PC-9 (cell line): ENCODE measurements at regions of chr5 and their contacts with region 1.

Region 1: DNA sequence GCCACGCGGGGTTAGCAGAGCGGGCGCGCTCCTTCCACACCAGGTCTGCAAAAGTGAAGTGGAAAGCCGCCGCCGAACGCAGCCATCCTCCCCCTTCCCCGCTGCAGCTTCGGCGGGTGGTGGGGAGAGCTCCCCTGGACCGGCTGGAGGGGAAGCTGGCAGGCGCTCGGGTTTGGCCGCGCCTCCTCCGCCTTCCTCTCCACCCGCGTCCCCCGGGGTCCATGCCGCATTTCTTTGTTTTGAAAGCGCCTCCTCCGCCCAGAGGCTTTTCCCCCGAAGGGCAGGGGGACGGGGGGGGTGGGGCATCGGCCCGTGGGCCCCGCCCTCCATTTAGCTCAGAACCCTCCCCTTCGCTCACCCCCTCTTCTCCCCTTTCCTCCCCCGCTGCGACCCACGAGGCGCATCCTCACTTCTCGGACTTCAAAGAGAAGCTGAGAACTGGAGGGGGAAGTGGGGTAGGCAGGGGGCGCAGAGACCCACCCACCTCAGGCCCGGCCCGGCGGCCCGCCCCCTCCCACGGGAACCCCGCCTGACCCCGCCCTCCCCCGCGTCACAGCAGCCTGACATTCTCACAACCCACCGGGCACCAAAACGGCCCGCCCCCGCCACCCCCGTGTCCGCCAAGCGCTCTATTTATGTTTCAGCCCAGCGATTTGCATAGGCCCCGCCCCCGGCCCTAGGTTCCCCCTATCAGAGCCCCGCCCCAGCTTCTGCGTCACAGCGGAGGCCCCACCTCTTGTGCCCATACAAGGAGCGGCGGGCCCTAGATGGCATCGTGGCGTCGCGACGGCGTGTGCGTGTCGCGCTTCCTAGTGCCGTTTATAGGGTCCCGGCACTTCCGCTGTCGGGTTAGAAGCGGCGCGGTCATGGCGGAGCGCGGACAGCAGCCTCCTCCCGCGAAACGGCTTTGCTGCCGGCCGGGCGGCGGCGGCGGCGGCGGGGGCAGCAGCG is at the start of gene ZSWIM6:
- DNase-seq: peak; percentile 94 to 96
- H3K4me3 ChIP-seq: peak within 1 kb of the TSS; percentile 97
- H3K27ac ChIP-seq: peak within 1 kb of the TSS; percentile 64
- H3K4me1 ChIP-seq: peaks cover 47% of the 10 kb centered on the region
- H3K27me3 ChIP-seq: no peaks in the 10 kb centered on the region
- CTCF ChIP-seq: no peak
- total RNA-seq, gene ZSWIM6: 9.7 and 12.9 TPM in 2 replicates

Region 2: GRCh38 chr5:60710373-60710772 is 621.3 kb before region 1 on chr5:
- CTCF ChIA-PET with region 1: no interaction called
- POLR2A ChIA-PET with region 1: no interaction called
- intact Hi-C with region 1: no loop called
- DNase-seq: no peak
- H3K4me3 ChIP-seq: no peak overlapping the region
- H3K27ac ChIP-seq: no peak overlapping the region
- H3K4me1 ChIP-seq: no peaks in the 10 kb centered on the region
- H3K27me3 ChIP-seq: no peaks in the 10 kb centered on the region
- CTCF ChIP-seq: no peak

Region 3: GRCh38 chr5:61055434-61056006 is 276.2 kb before region 1 on chr5:
- CTCF ChIA-PET with region 1: no interaction called
- POLR2A ChIA-PET with region 1: interaction called, 3 read pairs
- intact Hi-C with region 1: loop called (anchors 1 kb)
- DNase-seq: peak in 1 of 2 experiments; percentile 42
- H3K4me3 ChIP-seq: no peak overlapping the region
- H3K27ac ChIP-seq: no peak overlapping the region
- H3K4me1 ChIP-seq: peaks cover 29% of the 10 kb centered on the region
- H3K27me3 ChIP-seq: no peaks in the 10 kb centered on the region
- CTCF ChIP-seq: peak; percentile 75

Region 4: GRCh38 chr5:61167382-61167781 is 164.3 kb before region 1 on chr5:
- CTCF ChIA-PET with region 1: interaction called, 3 read pairs
- POLR2A ChIA-PET with region 1: interaction called, 4 read pairs
- intact Hi-C with region 1: loop called (anchors 1 kb)
- DNase-seq: peak in 1 of 2 experiments; percentile 11
- H3K4me3 ChIP-seq: no peak overlapping the region
- H3K27ac ChIP-seq: no peak overlapping the region
- H3K4me1 ChIP-seq: peaks cover 13% of the 10 kb centered on the region
- H3K27me3 ChIP-seq: no peaks in the 10 kb centered on the region
- CTCF ChIP-seq: peak; percentile 67

Region 5: DNA sequence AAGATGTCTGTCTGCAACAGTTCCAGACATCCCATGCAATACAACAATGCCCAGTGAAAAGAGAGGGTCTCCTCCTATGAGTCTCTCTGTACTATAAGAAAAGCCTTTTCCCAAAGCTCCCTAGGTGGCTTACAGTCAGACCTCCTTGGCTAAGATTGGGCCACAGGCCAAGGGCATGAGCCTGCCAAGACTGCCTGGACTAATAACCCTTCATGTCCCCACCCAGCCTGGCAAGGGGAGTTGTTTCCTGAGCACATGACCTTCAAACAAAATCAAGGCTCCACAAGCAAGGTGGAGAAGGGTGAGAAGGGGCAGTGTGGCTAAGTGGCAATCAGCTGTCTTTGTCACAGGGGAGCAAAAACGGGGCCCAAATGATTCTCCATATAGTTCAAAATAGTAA is 75.2 kb before region 1 on chr5:
- CTCF ChIA-PET with region 1: no interaction called
- POLR2A ChIA-PET with region 1: interaction called, 8 read pairs
- intact Hi-C with region 1: loop called (anchors 5 kb)
- DNase-seq: peak in 1 of 2 experiments; percentile 26
- H3K4me3 ChIP-seq: no peak overlapping the region
- H3K27ac ChIP-seq: no peak overlapping the region
- H3K4me1 ChIP-seq: peaks cover 34% of the 10 kb centered on the region
- H3K27me3 ChIP-seq: no peaks in the 10 kb centered on the region
- CTCF ChIP-seq: no peak

Region 6: DNA sequence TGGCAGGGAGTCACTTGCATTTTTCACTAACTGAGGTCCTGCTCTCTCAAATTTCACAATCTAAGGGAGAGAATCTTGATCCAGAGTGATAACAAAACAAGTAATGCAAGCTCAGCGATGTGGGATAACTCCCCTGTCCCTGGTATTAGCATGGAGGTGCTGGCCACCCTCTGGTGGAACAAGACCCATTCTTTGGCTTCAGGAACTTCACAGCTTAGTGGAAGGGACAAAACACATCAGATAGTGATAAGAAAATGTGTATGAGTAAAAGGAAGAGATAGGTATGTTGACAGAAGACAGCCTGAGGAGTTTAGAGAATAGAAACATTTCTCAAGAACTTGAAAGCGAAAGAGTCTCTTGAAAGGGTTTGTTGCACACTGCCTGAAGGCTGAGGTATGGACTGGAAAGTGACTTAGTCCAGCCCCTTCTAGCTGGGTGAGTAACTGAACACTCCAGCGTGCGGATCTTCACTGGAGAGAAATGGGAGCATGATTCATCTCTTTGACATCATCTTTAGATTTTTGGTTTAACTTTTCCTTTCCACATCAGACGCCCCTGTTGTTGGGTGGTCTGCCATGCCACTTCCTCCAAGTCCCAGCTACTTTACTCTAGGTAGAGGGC is 25.1 kb before region 1 on chr5:
- CTCF ChIA-PET with region 1: interaction called, 3 read pairs
- POLR2A ChIA-PET with region 1: interaction called, 18 read pairs
- intact Hi-C with region 1: loop called (anchors 1 kb)
- DNase-seq: peak in 1 of 2 experiments; percentile 76
- H3K4me3 ChIP-seq: no peak overlapping the region
- H3K27ac ChIP-seq: no peak overlapping the region
- H3K4me1 ChIP-seq: peaks cover 71% of the 10 kb centered on the region
- H3K27me3 ChIP-seq: no peaks in the 10 kb centered on the region
- CTCF ChIP-seq: no peak

Region 7: GRCh38 chr5:61408476-61409168 is 76.9 kb after region 1 on chr5:
- CTCF ChIA-PET with region 1: interaction called, 3 read pairs
- POLR2A ChIA-PET with region 1: interaction called, 12 read pairs
- intact Hi-C with region 1: loop called (anchors 1 kb)
- DNase-seq: peak; percentile 98 to 99
- H3K4me3 ChIP-seq: peak overlapping the region; percentile 49; the same call in 1 of the 2 replicates
- H3K27ac ChIP-seq: peak overlapping the region; percentile 99
- H3K4me1 ChIP-seq: peaks cover 27% of the 10 kb centered on the region
- H3K27me3 ChIP-seq: no peaks in the 10 kb centered on the region
- CTCF ChIP-seq: no peak

Region 8: GRCh38 chr5:61569353-61569752 is 237.7 kb after region 1 on chr5:
- CTCF ChIA-PET with region 1: no interaction called
- POLR2A ChIA-PET with region 1: no interaction called
- intact Hi-C with region 1: no loop called
- DNase-seq: no peak
- H3K4me3 ChIP-seq: no peak overlapping the region
- H3K27ac ChIP-seq: no peak overlapping the region
- H3K4me1 ChIP-seq: no peaks in the 10 kb centered on the region
- H3K27me3 ChIP-seq: peaks cover 19% of the 10 kb centered on the region; the same call in 1 of the 2 replicates
- CTCF ChIP-seq: no peak

Region 9: DNA sequence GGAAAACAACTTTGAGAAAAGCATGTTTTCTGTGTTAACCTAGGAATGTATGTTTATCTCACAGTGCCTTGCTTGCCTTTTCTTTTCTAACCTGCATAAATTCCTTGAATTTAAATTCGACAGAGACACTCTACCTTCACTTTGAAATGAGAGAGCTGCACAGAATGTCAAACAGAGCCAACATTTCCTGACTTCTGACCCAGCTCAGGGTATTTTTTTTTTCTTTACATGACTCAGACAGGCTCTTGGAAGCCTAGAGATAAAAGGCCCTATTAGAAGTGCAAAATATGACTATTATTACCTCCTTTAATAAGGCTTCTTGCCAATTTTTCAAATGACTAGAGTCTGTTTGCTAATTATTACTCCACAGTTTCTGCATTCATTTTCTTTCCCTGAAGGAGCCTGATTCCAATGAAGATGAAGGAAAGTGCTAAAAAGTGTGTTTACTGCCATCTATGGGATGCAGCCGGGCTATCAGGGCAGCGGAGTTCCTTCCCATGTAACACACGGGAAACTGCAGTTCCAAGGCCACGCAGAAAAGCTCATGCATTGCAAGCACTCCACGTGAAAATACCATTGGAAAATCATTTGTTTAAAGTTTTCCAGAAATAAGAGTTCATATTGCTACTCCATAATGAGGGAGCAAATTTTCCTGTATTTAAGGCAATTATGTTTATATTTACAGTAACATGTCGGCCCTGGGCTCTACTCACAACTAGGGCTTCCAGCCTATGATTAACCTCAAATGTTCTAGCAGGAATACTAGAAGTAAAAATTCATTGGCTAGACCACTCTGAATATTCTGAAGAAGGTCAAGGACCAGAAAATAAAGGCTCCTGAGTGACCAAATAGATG is 486.0 kb after region 1 on chr5:
- CTCF ChIA-PET with region 1: no interaction called
- POLR2A ChIA-PET with region 1: interaction called, 4 read pairs
- intact Hi-C with region 1: loop called (anchors 2 kb)
- DNase-seq: peak in 1 of 2 experiments; percentile 19
- H3K4me3 ChIP-seq: no peak overlapping the region
- H3K27ac ChIP-seq: no peak overlapping the region
- H3K4me1 ChIP-seq: no peaks in the 10 kb centered on the region
- H3K27me3 ChIP-seq: peaks cover 30% of the 10 kb centered on the region; the same call in 1 of the 2 replicates
- CTCF ChIP-seq: peak; percentile 57